ENCODE measurements at regions of chr14 and their contacts with region 1.

Region 1: DNA sequence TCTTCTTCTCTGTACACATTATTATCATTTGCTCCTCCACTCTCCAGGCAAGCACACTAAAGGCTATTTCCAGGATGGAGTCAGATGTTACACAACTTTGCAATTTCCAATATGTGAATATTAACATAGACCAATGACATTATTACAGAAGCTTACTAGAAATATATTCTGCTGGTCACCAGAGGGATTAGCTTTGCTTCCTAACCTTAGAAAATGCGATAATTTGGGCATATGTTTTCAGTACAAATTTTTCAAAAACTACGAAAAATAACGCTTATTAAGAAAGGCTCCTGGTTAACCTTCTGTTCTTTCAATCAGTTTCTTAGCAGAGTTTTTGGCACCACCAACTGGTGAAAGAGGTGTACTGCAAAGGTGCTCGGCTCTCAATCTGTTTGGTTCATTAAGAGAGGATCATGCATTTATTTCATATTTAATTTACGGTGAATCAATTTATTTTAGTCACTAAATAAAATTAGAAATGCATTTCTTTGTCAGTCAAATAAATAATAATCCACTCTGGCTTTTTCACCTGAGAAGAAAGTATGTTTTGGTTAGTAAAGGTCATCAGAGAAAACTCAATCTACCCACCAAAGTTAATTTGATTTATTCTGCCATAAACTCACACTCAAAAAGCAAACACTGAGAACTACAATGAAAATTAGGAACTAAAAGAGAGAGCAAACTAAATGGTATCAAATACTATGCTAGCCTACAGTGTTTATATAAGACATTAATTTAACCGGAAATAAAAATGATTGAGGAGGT is 39.2 kb downstream of the EFCAB11 start:
- DNase-seq: peak; percentile 72
- H3K4me3 ChIP-seq: no peak overlapping the region
- H3K27ac ChIP-seq: peak overlapping the region in 1 of 4 donors; percentile 22
- H3K4me1 ChIP-seq: peaks cover 0 to 39% (median 33%) of the 10 kb centered on the region in 4 donors
- H3K27me3 ChIP-seq: no peaks in the 10 kb centered on the region
- CTCF ChIP-seq: peak; percentile 79 to 93 (median 89)
- EP300 ChIP-seq: no peak
- POLR2A ChIP-seq: no peak

Region 2: GRCh38 chr14:89027097-89027740 is 888.1 kb before region 1 on chr14:
- intact Hi-C with region 1: loop called (anchors 1 kb)
- DNase-seq: peak; percentile 71
- H3K4me3 ChIP-seq: peak overlapping the region; percentile 26 to 60 (median 52)
- H3K27ac ChIP-seq: peak overlapping the region in 1 of 4 donors; percentile 46
- H3K4me1 ChIP-seq: peaks cover 0 to 17% (median 12%) of the 10 kb centered on the region in 4 donors
- H3K27me3 ChIP-seq: peaks cover 0 to 24% (median 0%) of the 10 kb centered on the region in 3 donors
- CTCF ChIP-seq: peak; percentile 43 to 96 (median 66)
- EP300 ChIP-seq: no peak
- POLR2A ChIP-seq: no peak

Region 3: GRCh38 chr14:89178802-89179535 is 736.3 kb before region 1 on chr14:
- intact Hi-C with region 1: loop called (anchors 5 kb)
- DNase-seq: no peak
- H3K4me3 ChIP-seq: no peak overlapping the region
- H3K27ac ChIP-seq: peak overlapping the region in 2 of 4 donors; percentile 0 to 51
- H3K4me1 ChIP-seq: peaks cover 0 to 31% (median 22%) of the 10 kb centered on the region in 4 donors
- H3K27me3 ChIP-seq: no peaks in the 10 kb centered on the region
- CTCF ChIP-seq: no peak
- EP300 ChIP-seq: no peak
- POLR2A ChIP-seq: no peak

Region 4: DNA sequence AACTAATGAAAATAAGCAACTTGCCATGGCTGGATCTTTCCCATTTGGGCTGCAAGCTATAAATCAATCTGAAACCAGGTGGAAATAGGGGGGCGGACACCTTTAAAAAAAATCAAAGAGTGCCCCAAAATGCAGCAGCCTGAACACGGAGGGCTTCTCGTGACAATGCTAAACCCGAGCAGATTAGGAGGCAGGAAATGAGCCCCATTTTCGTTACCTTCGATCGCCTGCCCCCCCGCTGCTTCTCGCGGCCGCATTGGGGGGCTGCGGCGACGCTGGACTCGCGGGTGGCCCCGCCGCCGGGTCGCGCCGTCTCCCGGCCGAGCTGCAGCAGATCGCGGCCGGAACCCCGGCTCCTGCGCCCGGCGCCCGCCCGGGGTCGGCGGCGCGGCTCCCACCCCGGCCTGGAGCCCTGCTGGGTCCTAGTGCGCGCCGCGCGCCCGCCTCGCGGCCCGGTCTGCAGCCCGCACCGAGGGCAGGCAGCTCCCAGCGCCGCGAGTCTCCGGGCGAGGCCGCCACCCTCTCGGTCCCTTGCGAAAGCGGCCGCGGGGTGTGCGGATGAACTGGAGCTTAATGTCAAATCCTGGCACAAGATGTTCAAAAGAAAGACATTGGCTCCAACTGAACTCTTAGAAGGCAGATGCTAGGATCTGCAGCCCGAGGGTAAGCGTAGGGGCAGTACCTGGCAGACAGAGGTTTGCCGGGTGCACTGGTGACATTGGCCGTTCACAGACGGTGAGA is 296.3 kb before region 1 on chr14:
- intact Hi-C with region 1: loop called (anchors 10 kb)
- DNase-seq: peak; percentile 76
- H3K4me3 ChIP-seq: peak overlapping the region; percentile 55 to 85 (median 68)
- H3K27ac ChIP-seq: peak overlapping the region; percentile 70 to 84 (median 76)
- H3K4me1 ChIP-seq: peaks cover 0 to 28% (median 13%) of the 10 kb centered on the region in 4 donors
- H3K27me3 ChIP-seq: no peaks in the 10 kb centered on the region
- CTCF ChIP-seq: no peak
- EP300 ChIP-seq: no peak
- POLR2A ChIP-seq: no peak

Region 5: GRCh38 chr14:89833120-89833644 is 82.1 kb before region 1 on chr14:
- intact Hi-C with region 1: no loop called
- DNase-seq: no peak
- H3K4me3 ChIP-seq: no peak overlapping the region
- H3K27ac ChIP-seq: peak overlapping the region in 1 of 4 donors; percentile 6
- H3K4me1 ChIP-seq: no peaks in the 10 kb centered on the region
- H3K27me3 ChIP-seq: no peaks in the 10 kb centered on the region
- CTCF ChIP-seq: no peak
- EP300 ChIP-seq: no peak
- POLR2A ChIP-seq: no peak

Region 6: DNA sequence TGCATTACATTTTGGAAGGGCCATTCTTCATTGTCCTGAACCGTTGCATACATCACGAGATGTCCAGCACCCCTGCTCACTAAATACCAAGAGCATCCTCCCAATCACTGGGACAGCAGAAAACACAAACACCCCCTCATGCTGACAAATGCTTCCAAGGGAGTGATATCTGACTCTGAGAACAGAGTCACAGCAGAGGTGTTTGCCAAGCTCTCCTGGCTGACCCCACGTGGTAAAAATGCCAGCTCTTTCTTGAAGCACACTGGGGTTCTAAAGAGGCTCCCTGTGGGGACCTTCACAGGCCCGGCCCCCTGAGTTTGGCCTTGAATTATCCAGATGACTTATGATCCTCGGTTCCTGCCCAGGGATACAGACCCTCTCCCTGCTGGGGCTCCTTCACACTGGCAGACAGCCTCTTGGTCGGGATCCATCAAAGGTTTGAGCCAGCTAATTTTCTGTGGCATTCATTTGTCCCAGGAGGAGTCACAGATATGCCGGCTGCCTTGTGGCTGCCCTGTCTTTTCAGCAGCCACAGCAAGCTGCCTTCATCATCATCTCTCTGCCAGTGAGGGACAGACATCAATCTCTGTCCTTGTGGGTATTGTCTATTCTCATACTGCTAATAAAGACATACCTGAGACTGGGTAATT is 297.9 kb after region 1 on chr14:
- intact Hi-C with region 1: no loop called
- DNase-seq: no peak
- H3K4me3 ChIP-seq: no peak overlapping the region
- H3K27ac ChIP-seq: no peak overlapping the region
- H3K4me1 ChIP-seq: no peaks in the 10 kb centered on the region
- H3K27me3 ChIP-seq: no peaks in the 10 kb centered on the region
- CTCF ChIP-seq: no peak
- EP300 ChIP-seq: no peak
- POLR2A ChIP-seq: no peak